Adrenal gland (tissue), 19 donors: ENCODE measurements at regions of chr13 and their contacts with region 1.

Region 1: DNA sequence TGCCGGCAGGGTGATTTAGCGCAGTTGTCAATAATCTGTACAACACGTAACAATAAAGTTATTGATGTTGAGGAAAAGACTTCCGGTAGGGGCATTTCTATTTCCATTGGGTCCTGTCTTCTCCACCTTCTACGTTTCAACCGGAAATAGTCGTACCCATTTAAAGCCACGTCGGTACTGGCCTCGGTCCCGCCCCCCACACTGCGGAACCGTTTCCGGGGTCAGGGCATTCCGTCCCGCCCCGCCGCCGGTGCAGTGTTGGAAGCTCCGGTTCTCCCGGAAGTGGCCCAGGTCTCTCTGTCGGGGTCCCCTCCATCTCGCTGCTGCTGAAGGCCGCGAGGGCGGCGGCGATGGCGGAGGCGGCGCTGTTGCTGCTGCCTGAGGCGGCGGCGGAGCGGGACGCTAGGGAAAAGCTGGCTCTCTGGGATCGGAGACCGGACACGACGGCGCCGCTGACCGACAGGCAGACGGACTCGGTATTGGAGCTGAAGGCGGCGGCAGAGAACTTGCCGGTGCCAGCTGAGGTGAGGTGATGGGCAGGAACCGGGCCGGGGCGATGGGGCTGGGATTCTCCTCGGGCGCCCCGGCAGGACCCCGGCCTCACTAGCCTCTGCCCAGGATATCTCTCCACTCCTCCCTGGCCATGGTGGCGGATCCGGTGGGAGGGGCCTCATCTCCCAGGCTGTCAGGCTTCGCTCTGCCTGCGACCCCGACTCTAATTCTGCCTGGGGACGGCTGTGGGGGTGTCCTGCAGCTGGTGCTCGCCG is at the start of gene COG3:
- DNase-seq: peak; percentile 93 to 98 (median 96)
- H3K4me3 ChIP-seq: peak within 1 kb of the TSS; percentile 44 to 97 (median 80)
- H3K27ac ChIP-seq: peak within 1 kb of the TSS; percentile 77 to 92 (median 91)
- H3K4me1 ChIP-seq: peaks cover 35 to 47% of the 10 kb centered on the region in 2 donors
- H3K27me3 ChIP-seq: no peaks in the 10 kb centered on the region
- CTCF ChIP-seq: peak in 2 of 6 experiments; percentile 2 to 35
- POLR2A ChIP-seq: peak; percentile 78 to 79
- total RNA-seq, gene COG3: 22.3 to 57.1 (median 35.4) TPM

Region 2: GRCh38 chr13:45417790-45418534 is 46.9 kb before region 1 on chr13 and contains the start of gene SLC25A30:
- intact Hi-C with region 1: loop called in 1 of 2 experiments (anchors 10 kb)
- DNase-seq: peak; percentile 96 to 98 (median 97)
- H3K4me3 ChIP-seq: peak within 1 kb of the TSS; percentile 26 to 63 (median 50)
- H3K27ac ChIP-seq: peak within 1 kb of the TSS; percentile 70 to 96 (median 88)
- H3K4me1 ChIP-seq: peaks cover 11 to 23% of the 10 kb centered on the region in 2 donors
- H3K27me3 ChIP-seq: no peaks in the 10 kb centered on the region
- CTCF ChIP-seq: no peak
- POLR2A ChIP-seq: peak; percentile 24 to 82
- total RNA-seq, gene SLC25A30: 16.6 to 45.6 (median 19.2) TPM

Region 3: GRCh38 chr13:45737571-45738017 is 272.7 kb after region 1 on chr13:
- intact Hi-C with region 1: no loop called
- DNase-seq: no peak
- H3K4me3 ChIP-seq: no peak overlapping the region
- H3K27ac ChIP-seq: no peak overlapping the region
- H3K4me1 ChIP-seq: no peaks in the 10 kb centered on the region
- H3K27me3 ChIP-seq: no peaks in the 10 kb centered on the region
- CTCF ChIP-seq: peak in 1 of 6 experiments; percentile 3
- POLR2A ChIP-seq: no peak